Left cardiac atrium (tissue), 4 donors: ENCODE measurements at regions of chr5 and their contacts with region 1.

Region 1: GRCh38 chr5:168268949-168269943 is 22.2 kb upstream of the WWC1 start:
- DNase-seq: peak; percentile 90
- ATAC-seq: peak; percentile 89 to 94

Region 2: DNA sequence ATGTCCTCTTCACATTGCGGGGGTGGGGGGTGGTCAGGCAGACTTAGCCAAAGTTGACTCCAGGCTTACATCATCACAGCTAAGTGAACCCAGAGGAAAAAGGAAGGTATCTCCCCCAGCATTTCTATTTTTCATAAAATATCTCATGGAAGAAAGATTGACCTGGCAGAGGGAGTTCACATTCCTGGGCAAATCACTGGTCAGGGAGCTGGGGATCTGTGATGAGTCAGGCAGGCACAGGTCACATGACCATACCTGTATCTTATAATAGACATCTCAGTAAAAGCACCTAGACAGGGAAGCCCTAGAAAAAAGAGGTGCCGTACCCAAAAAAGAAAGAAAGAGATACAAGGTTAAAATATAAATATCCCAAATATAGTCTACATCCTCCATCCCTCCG is 35.1 kb before region 1 on chr5:
- intact Hi-C with region 1: no loop called
- DNase-seq: no peak
- ATAC-seq: no peak

Region 3: DNA sequence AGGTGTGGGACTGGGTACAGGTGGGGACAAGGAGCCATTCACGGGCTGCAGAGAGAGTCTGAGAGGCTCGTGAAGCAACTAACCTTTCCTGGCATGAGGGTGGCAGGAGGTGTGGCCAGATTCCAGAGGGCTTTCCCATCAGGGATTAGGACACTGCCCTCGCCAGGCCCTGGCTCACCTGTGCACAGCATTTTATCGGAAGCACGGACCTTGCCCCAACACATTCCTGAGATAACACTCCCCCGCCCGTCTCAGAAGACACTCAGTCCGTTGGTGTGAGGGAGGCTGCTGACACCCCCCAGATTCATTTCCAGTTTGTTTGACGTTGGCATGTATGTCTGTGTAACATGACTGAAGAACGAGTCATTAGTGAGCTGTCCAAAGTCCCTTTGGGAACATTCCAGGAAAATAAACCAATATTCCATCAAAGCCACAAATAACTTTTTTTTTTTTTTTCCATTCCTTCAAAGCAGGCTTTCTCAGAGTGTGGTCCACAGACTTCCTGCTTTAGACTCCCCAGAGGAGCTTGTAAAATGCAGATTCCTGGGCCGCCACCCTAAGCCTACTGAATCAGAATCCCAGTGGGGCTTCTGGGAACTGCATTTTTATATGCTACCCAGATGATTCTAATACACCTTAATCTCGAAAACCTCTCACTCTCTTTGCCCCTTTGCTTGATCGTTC is 45.6 kb after region 1 on chr5:
- intact Hi-C with region 1: no loop called
- DNase-seq: peak; percentile 42
- ATAC-seq: peak; percentile 65 to 77

Region 4: GRCh38 chr5:168486136-168486879 is 217.1 kb after region 1 on chr5 and contains the start of gene RARS1:
- intact Hi-C with region 1: loop called (anchors 5 to 10 kb)
- DNase-seq: peak; percentile 94
- ATAC-seq: peak; percentile 100
- total RNA-seq, gene RARS1: 48.8 to 53.0 TPM